Caco-2 (cell line): ENCODE measurements at regions of chr21 and their contacts with region 1.

Region 1: DNA sequence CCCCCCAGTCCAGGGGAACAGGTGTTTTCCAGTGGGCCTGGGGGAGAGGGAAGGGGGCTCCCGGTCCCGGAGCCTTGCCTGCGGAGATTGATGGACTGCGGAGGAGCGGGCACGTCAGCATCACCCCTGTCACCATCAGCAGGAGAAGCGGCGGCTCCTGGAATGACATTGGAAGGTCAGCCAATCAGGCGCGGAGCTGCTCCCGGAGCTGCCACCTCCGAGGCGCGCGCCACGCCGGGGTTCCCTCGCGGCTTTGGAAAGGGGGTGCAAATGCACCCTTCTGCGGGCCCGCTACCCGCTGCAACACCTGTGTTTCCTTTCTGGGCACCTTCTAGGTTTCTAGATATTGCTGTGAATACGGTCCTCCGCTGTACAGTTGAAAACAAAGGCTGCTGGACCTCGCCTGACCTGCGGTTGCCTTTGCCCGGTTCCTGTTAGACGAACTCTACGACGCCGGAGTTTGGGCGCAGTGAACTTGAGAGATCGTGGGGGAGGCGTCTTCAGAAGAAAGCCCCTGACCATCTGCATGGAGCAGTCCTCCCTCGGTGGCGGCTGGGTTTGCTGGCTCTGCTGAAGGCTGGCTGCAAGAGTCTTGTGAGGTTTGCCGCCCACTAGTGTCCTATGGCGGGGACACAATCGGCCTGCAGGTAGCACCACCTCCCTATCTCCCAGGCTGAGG is 5.3 kb downstream of the DSCAM start:
- DNase-seq: peak; percentile 66 to 71
- H3K4me3 ChIP-seq: peak overlapping the region; percentile 23
- H3K4me3 Mint-ChIP-seq: peak overlapping the region; percentile 71
- H3K27ac Mint-ChIP-seq: no peak overlapping the region
- H3K4me1 ChIP-seq: no peaks in the 10 kb centered on the region
- H3K4me1 Mint-ChIP-seq: no peaks in the 10 kb centered on the region
- H3K27me3 ChIP-seq: no peaks in the 10 kb centered on the region
- H3K27me3 Mint-ChIP-seq: peaks cover 32% of the 10 kb centered on the region
- CTCF ChIP-seq: peak; percentile 55 to 85

Region 2: GRCh38 chr21:41068967-41069642 is 227.4 kb after region 1 on chr21:
- CTCF ChIA-PET with region 1: no interaction called
- POLR2A ChIA-PET with region 1: no interaction called
- intact Hi-C with region 1: loop called (anchors 5 kb)
- DNase-seq: peak; percentile 81 to 86
- H3K4me3 ChIP-seq: no peak overlapping the region
- H3K4me3 Mint-ChIP-seq: peak overlapping the region; percentile 47
- H3K27ac Mint-ChIP-seq: no peak overlapping the region
- H3K4me1 ChIP-seq: no peaks in the 10 kb centered on the region
- H3K4me1 Mint-ChIP-seq: no peaks in the 10 kb centered on the region
- H3K27me3 ChIP-seq: no peaks in the 10 kb centered on the region; the same call in 1 of the 2 replicates
- H3K27me3 Mint-ChIP-seq: peaks cover 20% of the 10 kb centered on the region
- CTCF ChIP-seq: peak; percentile 79 to 92